AG04449 (cell line): ENCODE measurements at regions of chr6 and their contacts with region 1.

Region 1: DNA sequence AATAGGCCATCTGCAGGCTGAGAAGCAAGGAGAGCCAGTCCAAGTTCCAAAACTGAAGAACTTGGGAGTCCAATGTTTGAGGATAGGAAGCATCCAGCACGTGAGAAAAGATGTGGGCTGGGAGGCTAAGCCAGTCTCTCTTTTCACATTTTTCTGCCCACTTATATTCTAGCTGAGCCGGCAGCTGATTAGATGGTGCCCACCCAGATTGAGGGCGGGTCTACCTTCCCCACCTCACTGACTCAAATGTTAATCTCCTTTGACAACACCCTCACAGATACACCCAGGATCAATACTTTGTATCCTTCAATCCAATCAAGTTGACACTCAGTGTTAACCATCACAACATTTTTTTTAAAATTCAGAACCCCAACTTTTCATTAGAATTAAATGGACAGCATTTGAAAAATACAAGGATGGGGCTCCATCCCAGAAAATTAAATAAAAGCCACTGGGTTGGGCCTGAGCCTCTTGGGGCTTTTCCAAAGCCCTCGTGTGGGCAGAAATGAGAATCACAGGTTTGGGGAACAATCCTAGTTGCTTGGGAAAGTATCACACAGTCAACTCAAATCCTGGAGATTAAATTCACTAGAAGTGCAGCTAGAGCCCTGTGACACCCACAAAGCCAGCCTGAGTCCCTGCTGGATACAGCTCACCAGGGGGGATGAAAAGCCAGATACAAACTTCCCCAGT is 2.2 kb downstream of the CLDN20 start:
- DNase-seq: no peak
- H3K4me3 ChIP-seq: no peak overlapping the region
- CTCF ChIP-seq: no peak

Region 2: GRCh38 chr6:154632119-154632518 is 633.9 kb before region 1 on chr6:
- CTCF ChIA-PET with region 1: no interaction called
- POLR2A ChIA-PET with region 1: no interaction called
- DNase-seq: no peak
- H3K4me3 ChIP-seq: no peak overlapping the region
- CTCF ChIP-seq: no peak

Region 3: DNA sequence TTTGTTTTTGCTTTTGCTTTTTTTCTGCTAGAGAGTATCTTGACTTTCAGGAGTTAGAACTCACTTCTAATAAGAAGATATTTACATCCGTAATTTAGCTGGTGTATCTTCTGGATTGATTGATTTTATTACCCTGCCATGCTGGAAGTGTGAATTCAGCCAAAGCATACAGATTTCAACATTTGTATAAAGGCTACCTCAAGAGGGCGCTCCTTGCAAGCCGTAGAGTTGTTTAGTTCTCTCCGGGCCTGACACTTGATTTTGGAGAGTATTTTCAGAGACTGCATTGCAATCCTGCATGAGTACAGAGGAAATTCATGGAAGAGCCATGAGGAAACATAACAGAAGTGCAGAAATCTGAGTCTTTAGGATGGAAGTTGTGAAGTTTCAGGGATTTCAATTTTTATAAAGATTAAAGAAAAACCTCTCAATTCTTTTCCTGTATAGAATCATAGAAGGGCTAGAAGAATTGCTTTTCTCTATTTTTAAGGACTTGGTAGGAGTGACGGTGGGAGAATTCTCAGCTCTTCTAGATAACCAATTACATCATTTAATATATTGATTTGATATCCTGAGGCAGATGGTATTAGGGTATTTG is 337.6 kb before region 1 on chr6:
- CTCF ChIA-PET with region 1: interaction called, 11 read pairs
- POLR2A ChIA-PET with region 1: no interaction called
- DNase-seq: no peak
- H3K4me3 ChIP-seq: no peak overlapping the region
- CTCF ChIP-seq: peak; percentile 53

Region 4: GRCh38 chr6:155253337-155253736 is 12.7 kb before region 1 on chr6:
- CTCF ChIA-PET with region 1: interaction called, 18 read pairs
- POLR2A ChIA-PET with region 1: no interaction called
- DNase-seq: no peak
- H3K4me3 ChIP-seq: no peak overlapping the region
- CTCF ChIP-seq: no peak

Region 5: DNA sequence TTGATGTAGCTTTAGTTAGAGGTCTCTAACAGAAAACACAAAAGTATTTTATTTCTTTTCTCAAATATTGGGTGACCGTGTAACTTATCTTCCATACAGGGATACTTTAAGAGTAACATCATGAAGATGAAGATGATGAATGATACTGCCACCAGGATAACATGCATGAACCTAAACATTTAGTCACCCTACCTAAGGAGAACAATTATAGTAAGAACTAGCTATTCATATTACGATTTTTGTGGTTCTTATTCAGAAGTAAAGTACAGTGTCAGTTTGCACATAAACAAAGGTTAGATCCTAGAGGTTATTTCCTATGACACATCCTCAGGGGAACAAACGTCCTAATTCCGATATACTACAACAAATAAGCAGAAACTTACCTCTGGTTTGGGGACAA is 18.8 kb after region 1 on chr6:
- CTCF ChIA-PET with region 1: interaction called, 12 read pairs
- POLR2A ChIA-PET with region 1: no interaction called
- DNase-seq: no peak
- H3K4me3 ChIP-seq: no peak overlapping the region
- CTCF ChIP-seq: no peak